Esophagus muscularis mucosa (tissue), 4 donors: ENCODE measurements at regions of chr1 and their contacts with region 1.

Region 1: GRCh38 chr1:152141974-152142584 is 16.9 kb downstream of the RPTN start:
- DNase-seq: peak; percentile 83
- H3K4me3 ChIP-seq: no peak overlapping the region
- H3K27ac ChIP-seq: no peak overlapping the region
- H3K4me1 ChIP-seq: no peaks in the 10 kb centered on the region
- H3K27me3 ChIP-seq: peaks cover 0 to 21% (median 0%) of the 10 kb centered on the region in 4 donors
- CTCF ChIP-seq: peak; percentile 59 to 65 (median 62)
- EP300 ChIP-seq: no peak
- POLR2A ChIP-seq: no peak

Region 2: DNA sequence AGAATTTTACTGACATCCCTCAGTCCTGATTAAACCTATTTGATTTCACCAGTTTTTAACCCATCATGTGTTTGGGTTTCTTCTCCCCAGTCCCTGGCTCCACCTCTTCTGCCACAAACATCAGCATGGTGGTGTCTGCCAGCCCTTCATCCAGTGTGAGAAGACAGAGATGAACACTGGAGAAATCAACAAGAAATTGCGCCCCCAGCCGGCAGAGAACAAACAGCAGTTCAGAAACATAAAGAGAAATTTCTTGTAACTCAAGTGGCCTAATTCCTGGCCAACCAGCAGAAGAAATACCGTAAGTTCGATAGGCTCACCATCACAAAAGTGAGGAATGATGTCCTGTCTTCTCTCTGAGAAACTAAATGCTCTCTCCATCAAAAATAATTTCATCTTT is 123.5 kb before region 1 on chr1:
- intact Hi-C with region 1: no loop called
- DNase-seq: no peak
- H3K4me3 ChIP-seq: no peak overlapping the region
- H3K27ac ChIP-seq: no peak overlapping the region
- H3K4me1 ChIP-seq: no peaks in the 10 kb centered on the region
- H3K27me3 ChIP-seq: no peaks in the 10 kb centered on the region
- CTCF ChIP-seq: no peak
- EP300 ChIP-seq: no peak
- POLR2A ChIP-seq: no peak

Region 3: DNA sequence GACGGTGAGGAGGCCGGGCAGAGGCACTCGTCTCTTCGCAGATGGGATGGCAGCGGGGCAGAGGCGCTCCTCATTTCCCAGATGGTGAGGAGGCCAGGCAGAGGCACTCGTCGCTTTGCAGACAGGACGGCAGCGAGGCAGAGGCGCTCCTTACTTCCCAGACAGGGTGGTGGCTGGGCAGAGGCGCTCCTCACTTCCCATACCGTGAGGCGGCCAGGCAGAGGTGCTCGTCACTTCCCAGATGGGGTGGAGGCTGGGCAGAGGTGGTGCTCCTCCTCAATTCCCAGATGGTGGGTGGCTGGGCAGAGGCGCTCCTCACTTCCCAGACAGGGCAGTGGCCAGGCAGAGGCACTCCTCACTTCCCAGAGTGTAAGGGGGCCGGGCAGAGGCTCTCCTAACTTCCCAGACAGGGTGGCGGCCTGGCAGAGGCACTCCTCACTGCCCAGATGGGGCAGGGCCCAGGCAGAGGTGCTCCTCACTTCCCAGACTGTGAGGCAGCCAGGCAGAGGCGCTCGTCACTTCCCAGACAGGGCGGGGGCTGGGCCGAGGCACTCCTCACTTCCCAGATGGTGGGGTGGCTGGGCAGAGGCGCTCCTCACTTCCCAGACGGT is 63.1 kb before region 1 on chr1:
- intact Hi-C with region 1: no loop called
- DNase-seq: peak; percentile 66
- H3K4me3 ChIP-seq: no peak overlapping the region
- H3K27ac ChIP-seq: no peak overlapping the region
- H3K4me1 ChIP-seq: no peaks in the 10 kb centered on the region
- H3K27me3 ChIP-seq: peaks cover 0 to 25% (median 0%) of the 10 kb centered on the region in 4 donors
- CTCF ChIP-seq: no peak
- EP300 ChIP-seq: no peak
- POLR2A ChIP-seq: no peak

Region 4: GRCh38 chr1:152182431-152182830 is 40.4 kb after region 1 on chr1:
- intact Hi-C with region 1: loop called (anchors 2 kb)
- DNase-seq: no peak
- H3K4me3 ChIP-seq: no peak overlapping the region
- H3K27ac ChIP-seq: no peak overlapping the region
- H3K4me1 ChIP-seq: peaks cover 0 to 7% (median 5%) of the 10 kb centered on the region in 4 donors
- H3K27me3 ChIP-seq: no peaks in the 10 kb centered on the region
- CTCF ChIP-seq: peak in 2 of 3 experiments; percentile 28 to 35
- EP300 ChIP-seq: no peak
- POLR2A ChIP-seq: no peak

Region 5: DNA sequence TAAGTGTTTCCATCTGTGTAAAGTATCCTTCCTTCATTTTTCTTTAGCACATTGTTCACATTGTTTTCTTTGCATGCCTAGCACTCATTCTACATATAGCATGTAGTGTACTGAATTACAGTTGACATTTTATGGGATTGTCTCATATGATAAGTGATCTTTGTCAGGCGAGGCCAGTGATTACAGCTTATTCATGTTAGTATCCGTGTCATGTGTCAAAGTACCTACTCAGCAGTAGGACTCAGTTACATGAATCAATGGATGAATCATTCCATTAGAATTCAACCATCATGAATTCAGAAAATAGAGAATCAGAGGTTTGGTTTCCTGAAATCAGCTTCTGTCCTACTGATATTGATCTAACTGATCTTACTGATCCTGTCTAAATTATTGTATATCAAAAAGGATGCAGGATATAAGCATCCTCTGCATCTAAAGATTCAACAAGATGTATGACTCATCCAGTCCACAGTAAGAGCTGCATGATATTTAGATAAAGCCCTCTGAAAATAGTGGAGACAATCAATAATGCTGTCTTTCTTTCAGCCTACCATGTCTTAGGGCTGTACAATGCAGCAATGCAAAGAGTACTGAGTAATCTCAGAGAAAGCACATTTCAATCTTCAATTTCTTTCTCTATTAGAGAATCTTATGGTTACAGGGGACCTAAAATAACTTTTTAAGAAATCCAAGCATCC is 102.6 kb after region 1 on chr1:
- intact Hi-C with region 1: no loop called
- DNase-seq: no peak
- H3K4me3 ChIP-seq: no peak overlapping the region
- H3K27ac ChIP-seq: no peak overlapping the region
- H3K4me1 ChIP-seq: no peaks in the 10 kb centered on the region
- H3K27me3 ChIP-seq: no peaks in the 10 kb centered on the region
- CTCF ChIP-seq: no peak
- EP300 ChIP-seq: no peak
- POLR2A ChIP-seq: no peak